ENCODE measurements at regions of chr1 and their contacts with region 1.

Region 1: GRCh38 chr1:27144920-27145661 is 9.8 kb downstream of the SLC9A1 start:
- DNase-seq: no peak
- H3K4me3 ChIP-seq: no peak overlapping the region
- H3K27ac ChIP-seq: peak overlapping the region; percentile 44
- H3K4me1 ChIP-seq: peaks cover 63% of the 10 kb centered on the region
- H3K27me3 ChIP-seq: no peaks in the 10 kb centered on the region
- CTCF ChIP-seq: no peak

Region 2: GRCh38 chr1:27057801-27058625 is 87.1 kb before region 1 on chr1:
- CTCF ChIA-PET with region 1: no interaction called
- dilution Hi-C with region 1: loop called (anchors 5 kb)
- in situ Hi-C with region 1: no loop called
- intact Hi-C with region 1: no loop called
- DNase-seq: no peak
- H3K4me3 ChIP-seq: no peak overlapping the region
- H3K27ac ChIP-seq: no peak overlapping the region
- H3K4me1 ChIP-seq: peaks cover 5% of the 10 kb centered on the region
- H3K27me3 ChIP-seq: no peaks in the 10 kb centered on the region
- CTCF ChIP-seq: no peak

Region 3: GRCh38 chr1:27111626-27112573 is 33.2 kb before region 1 on chr1:
- CTCF ChIA-PET with region 1: no interaction called
- dilution Hi-C with region 1: loop called (anchors 5 kb)
- in situ Hi-C with region 1: loop called in 1 of 2 experiments (anchors 5 kb)
- intact Hi-C with region 1: loop called (anchors 1 kb)
- DNase-seq: peak; percentile 100
- H3K4me3 ChIP-seq: no peak overlapping the region
- H3K27ac ChIP-seq: peak overlapping the region; percentile 43
- H3K4me1 ChIP-seq: peaks cover 35% of the 10 kb centered on the region
- H3K27me3 ChIP-seq: no peaks in the 10 kb centered on the region
- CTCF ChIP-seq: peak; percentile 8 to 65

Region 4: DNA sequence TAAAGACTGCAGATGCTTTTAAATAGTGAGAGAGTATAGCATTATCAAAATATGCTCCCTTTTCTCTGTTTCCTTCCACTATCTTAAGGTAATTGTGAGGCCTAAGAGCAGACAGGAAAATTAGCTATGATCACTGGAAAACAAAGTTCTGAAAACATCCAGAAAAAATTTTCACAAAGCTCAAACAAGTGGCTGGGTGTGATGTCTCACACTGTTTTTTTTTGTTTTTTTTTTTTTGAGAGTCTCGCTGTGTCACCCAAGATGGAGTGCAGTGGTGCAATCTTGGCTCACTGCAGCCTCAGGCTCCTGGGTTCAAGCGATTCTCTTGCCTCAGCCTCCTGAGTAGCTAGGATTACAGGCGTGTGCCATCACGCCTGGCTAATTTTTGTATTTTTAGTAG is 96.6 kb after region 1 on chr1:
- CTCF ChIA-PET with region 1: no interaction called
- dilution Hi-C with region 1: loop called (anchors 5 kb)
- in situ Hi-C with region 1: no loop called
- intact Hi-C with region 1: no loop called
- DNase-seq: no peak
- H3K4me3 ChIP-seq: no peak overlapping the region
- H3K27ac ChIP-seq: no peak overlapping the region
- H3K4me1 ChIP-seq: no peaks in the 10 kb centered on the region
- H3K27me3 ChIP-seq: no peaks in the 10 kb centered on the region
- CTCF ChIP-seq: no peak

Measured in mammary epithelial cell (primary cell).